A549 (cell line): ENCODE measurements at regions of chr20 and their contacts with region 1.

Region 1: DNA sequence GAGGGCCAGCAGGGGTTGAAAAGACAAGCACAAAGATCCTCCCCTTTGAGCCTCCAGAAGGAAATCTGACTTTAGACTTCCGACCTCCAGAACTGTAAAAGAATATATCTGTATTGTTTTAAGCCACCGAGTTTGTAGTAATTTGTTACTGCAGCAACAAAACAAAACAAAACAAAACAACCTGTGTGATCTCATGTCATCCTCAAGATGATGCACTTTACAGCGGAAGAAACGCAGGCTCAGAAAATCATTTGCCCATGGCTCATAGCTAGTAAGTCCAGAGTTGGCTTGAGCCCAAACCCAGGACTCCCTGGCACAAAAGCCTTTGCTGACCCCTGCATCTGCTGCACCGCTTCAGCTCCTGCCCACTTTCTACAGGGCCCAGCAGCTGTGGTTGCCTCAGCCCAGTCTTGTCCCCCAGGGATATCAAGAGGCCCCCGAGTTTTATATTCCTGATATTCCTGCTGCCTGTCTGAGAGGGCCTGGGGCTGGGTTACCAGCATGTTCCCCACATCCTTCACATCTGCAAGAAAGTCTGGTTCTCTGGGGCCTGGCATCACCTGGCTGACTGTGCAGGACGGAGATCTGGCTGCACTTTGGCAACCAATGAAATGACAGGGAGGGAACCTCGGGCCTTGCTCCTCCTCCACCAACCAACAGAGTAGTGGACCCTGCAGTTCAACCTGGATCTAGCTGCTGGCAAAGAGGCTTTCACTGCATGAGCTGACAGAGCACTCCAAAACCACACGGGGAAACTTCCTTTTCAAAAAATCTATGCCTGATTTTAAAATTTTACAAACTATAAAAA is 56.9 kb downstream of the JPH2 start:
- DNase-seq: no peak
- ATAC-seq: peak in 1 of 2 experiments; percentile 16; a peak in 1 of 6 replicates
- H3K4me3 ChIP-seq: no peak overlapping the region
- H3K27ac ChIP-seq: no peak overlapping the region
- H3K4me1 ChIP-seq: no peaks in the 10 kb centered on the region
- CTCF ChIP-seq: no peak
- EP300 ChIP-seq: no peak
- POLR2A ChIP-seq: no peak
- RAD21 ChIP-seq: no peak

Region 2: DNA sequence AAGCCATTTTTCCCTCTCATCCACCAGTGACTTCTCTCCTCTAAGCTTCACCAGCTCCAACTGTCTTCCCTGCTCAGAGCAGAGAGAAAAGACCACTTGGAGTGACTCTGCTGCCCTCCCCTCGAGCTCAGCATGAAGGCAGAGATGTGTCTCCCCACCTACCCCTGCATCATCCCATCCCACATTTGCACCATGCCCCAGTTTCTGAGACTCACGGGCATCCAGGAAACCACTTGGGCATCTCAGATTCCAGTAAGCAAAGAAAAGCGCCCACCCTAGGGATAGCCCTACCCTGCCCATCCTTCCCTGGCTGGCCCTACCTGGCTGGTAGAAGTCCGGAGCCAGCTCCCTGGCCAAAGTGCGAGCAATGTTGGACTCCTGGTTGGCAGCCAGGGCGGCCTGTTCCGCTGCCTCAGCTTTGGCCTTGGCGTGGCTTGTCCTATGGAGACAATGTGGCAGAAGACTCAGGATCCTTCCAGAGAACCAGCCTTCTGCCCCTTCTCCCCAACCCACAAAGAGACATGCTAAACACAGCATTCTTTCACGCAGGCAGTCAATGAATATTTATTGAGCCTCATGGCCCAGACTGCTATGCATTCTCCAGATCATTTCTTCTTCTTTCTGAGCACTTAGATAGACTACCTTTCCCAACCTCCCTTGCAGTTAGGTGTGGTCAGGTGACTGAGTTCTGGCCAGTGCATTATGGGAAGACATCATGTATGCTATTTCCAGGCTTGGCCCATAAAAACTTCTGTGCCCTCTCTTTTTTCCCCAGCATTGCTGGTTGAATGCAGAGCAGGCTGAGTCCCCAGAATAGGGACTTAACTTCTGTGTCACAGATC is 11.7 kb before region 1 on chr20:
- CTCF ChIA-PET with region 1: interaction called, 65 read pairs
- POLR2A ChIA-PET with region 1: no interaction called
- DNase-seq: no peak
- ATAC-seq: no peak; a peak in 1 of 6 replicates
- H3K4me3 ChIP-seq: no peak overlapping the region
- H3K27ac ChIP-seq: no peak overlapping the region
- H3K4me1 ChIP-seq: no peaks in the 10 kb centered on the region; the same call in 2 of the 3 replicates
- CTCF ChIP-seq: no peak
- EP300 ChIP-seq: no peak
- POLR2A ChIP-seq: no peak
- RAD21 ChIP-seq: no peak

Region 3: GRCh38 chr20:44210422-44211176 is 80.5 kb after region 1 on chr20 and contains the start of gene OSER1:
- CTCF ChIA-PET with region 1: no interaction called
- POLR2A ChIA-PET with region 1: no interaction called
- DNase-seq: peak; percentile 93 to 98
- ATAC-seq: peak; percentile 89 to 90
- H3K4me3 ChIP-seq: peak within 1 kb of the TSS; percentile 64
- H3K27ac ChIP-seq: peak within 1 kb of the TSS; percentile 74 to 98
- H3K4me1 ChIP-seq: peaks cover 36% of the 10 kb centered on the region
- CTCF ChIP-seq: no peak
- EP300 ChIP-seq: peak in 1 of 2 experiments; percentile 27; a peak in 1 of 5 replicates
- POLR2A ChIP-seq: peak; percentile 56
- RAD21 ChIP-seq: no peak
- polyA plus RNA-seq, gene OSER1: 62.6 and 73.0 TPM in 2 replicates

Region 4: DNA sequence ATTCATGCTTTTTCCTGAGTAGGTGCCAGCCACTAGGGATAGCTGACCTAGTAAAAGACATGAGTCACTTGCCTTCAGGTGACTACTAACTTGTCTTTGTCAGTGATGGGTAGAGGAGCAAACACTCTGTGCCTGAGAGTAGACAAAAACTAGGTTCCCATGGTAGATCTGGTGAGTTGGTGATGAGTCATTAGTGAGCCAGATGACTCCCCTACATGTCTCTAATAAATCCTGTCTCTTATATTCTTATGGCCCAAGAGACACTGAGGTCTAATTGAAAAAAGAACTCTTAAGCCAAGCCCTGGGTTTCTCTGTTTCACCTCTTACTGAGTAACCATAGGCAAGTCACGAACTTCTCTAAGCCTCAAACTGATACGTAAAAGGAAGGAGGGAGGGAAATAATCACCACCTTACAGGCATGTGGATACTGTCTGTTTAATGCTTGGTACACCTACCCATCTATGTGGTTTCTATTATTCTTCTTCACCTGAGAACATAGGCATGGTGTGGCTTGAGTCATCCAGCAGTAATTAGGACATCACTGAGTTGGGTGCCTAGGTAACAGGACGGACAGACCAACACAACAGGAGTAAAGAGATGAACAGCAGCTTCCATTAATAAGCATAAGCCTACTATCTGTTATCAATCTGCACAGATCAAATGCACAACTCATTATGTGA is 365.8 kb after region 1 on chr20:
- CTCF ChIA-PET with region 1: no interaction called
- POLR2A ChIA-PET with region 1: no interaction called
- DNase-seq: peak; percentile 70 to 89
- ATAC-seq: peak; percentile 81 to 88
- H3K4me3 ChIP-seq: peak overlapping the region; percentile 15; the same call in 1 of the 3 replicates
- H3K27ac ChIP-seq: peak overlapping the region; percentile 86 to 90
- H3K4me1 ChIP-seq: peaks cover 47% of the 10 kb centered on the region
- CTCF ChIP-seq: no peak
- EP300 ChIP-seq: peak; percentile 7 to 36; a peak in 1 of 5 replicates
- POLR2A ChIP-seq: no peak
- RAD21 ChIP-seq: no peak